ENCODE measurements at regions of chr17 and their contacts with region 1.

Region 1: GRCh38 chr17:64320613-64321553 is 57.8 kb upstream of the TEX2 start:
- DNase-seq: peak; percentile 32
- ATAC-seq: peak; percentile 92
- H3K4me3 ChIP-seq: peak overlapping the region in 1 of 2 experiments; percentile 34; a peak in 2 of 4 replicates
- H3K27ac ChIP-seq: no peak overlapping the region
- H3K4me1 ChIP-seq: no peaks in the 10 kb centered on the region
- H3K27me3 ChIP-seq: no peaks in the 10 kb centered on the region
- CTCF ChIP-seq: peak; percentile 82

Region 2: DNA sequence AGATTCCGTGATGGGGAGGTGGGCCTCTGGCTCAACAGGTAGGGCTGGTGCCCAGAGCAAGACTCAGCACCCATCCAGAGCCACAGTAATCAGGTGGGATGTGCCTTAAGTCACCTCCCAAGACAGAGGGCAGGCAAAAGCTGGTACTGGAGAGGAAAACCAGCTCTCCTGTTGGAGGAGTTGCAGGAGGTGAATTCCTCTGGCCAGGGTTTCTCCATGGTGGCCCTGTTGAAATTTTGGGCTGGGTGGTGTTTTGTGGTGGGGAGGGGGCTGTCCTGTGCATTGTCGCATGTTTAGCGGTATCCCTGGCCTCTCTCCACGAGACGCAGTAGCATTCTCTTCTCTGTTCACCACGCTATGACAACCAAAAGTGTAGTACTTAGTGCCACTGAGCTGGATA is 12.3 kb after region 1 on chr17:
- CTCF ChIA-PET with region 1: no interaction called
- POLR2A ChIA-PET with region 1: interaction called, 17 read pairs
- in situ Hi-C with region 1: no loop called
- intact Hi-C with region 1: no loop called
- DNase-seq: no peak
- ATAC-seq: no peak
- H3K4me3 ChIP-seq: no peak overlapping the region
- H3K27ac ChIP-seq: no peak overlapping the region
- H3K4me1 ChIP-seq: no peaks in the 10 kb centered on the region
- H3K27me3 ChIP-seq: no peaks in the 10 kb centered on the region
- CTCF ChIP-seq: no peak

Region 3: DNA sequence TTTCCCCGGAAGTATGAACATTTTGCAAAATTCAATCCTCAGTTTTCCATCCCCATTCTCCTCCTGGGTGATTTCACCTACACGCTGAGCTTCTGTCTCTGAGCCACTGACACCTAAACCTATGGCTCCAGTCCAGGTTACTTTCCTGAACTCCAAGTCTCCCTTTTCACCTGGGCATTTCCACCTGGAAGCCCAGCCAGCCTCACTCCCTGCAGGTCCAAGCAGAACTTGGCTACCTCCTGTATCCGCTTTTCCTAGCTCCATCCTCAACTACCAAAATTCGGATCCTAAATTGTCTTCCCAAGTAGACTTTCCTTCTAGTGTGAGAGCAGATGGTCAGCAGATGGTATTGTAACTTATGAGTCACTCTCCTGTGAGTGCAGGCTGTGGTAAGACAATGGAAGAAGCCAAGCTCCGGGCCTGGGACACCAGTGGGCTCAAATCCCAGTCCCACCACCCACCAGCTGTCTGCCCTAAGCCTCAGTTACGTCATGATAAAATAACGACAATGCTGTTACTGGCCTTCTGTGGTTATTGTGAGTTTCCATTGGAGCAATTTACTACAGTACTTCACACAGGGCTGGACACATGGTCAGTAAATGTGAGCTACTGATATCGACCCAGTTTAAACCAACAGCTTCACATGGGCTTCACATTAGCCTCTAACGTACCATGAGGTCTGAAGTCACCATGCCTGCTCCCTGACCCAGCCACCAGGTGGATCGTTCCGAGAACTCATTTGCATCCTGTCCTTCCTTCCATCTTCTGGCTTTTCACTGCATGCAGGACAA is 36.5 kb after region 1 on chr17:
- CTCF ChIA-PET with region 1: interaction called, 11 read pairs
- POLR2A ChIA-PET with region 1: no interaction called
- in situ Hi-C with region 1: no loop called
- intact Hi-C with region 1: no loop called
- DNase-seq: no peak
- ATAC-seq: no peak
- H3K4me3 ChIP-seq: no peak overlapping the region
- H3K27ac ChIP-seq: no peak overlapping the region
- H3K4me1 ChIP-seq: no peaks in the 10 kb centered on the region
- H3K27me3 ChIP-seq: no peaks in the 10 kb centered on the region
- CTCF ChIP-seq: no peak